Vagina (tissue), 2 donors: ENCODE measurements at regions of chr3 and their contacts with region 1.

Region 1: GRCh38 chr3:164236837-164237236 is 841.5 kb downstream of the SI start:
- DNase-seq: no peak
- H3K4me3 ChIP-seq: no peak overlapping the region
- H3K27ac ChIP-seq: no peak overlapping the region
- H3K4me1 ChIP-seq: no peaks in the 10 kb centered on the region
- H3K27me3 ChIP-seq: no peaks in the 10 kb centered on the region
- CTCF ChIP-seq: no peak
- POLR2A ChIP-seq: no peak

Region 2: GRCh38 chr3:164049556-164050220 is 187.1 kb before region 1 on chr3:
- intact Hi-C with region 1: no loop called
- DNase-seq: no peak
- H3K4me3 ChIP-seq: no peak overlapping the region
- H3K27ac ChIP-seq: no peak overlapping the region
- H3K4me1 ChIP-seq: no peaks in the 10 kb centered on the region
- H3K27me3 ChIP-seq: no peaks in the 10 kb centered on the region
- CTCF ChIP-seq: no peak
- POLR2A ChIP-seq: no peak

Region 3: DNA sequence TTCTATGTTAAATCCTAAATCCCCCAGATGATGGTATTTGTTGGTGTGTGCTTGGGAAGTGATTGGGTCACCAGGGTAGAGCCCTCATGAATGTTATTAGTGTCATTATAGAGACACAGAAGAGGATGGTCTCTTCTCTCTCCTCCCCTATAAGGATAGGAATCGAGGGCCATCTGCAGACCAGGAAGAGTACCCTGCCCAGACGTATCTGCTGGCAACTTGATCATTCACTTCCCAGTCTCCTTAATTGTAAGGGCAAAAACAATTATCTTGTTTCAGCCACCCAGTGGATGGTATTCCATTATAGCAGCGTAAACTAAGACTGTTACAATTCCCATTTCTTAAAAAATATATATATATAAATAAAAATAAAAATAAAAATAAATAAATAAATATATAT is 50.7 kb before region 1 on chr3:
- intact Hi-C with region 1: loop called (anchors 2 kb)
- DNase-seq: no peak
- H3K4me3 ChIP-seq: no peak overlapping the region
- H3K27ac ChIP-seq: no peak overlapping the region
- H3K4me1 ChIP-seq: no peaks in the 10 kb centered on the region
- H3K27me3 ChIP-seq: no peaks in the 10 kb centered on the region
- CTCF ChIP-seq: no peak
- POLR2A ChIP-seq: no peak